ENCODE measurements at regions of chr1 and their contacts with region 1.

Region 1: GRCh38 chr1:94061513-94062443 is 59.2 kb downstream of the ABCA4 start:
- DNase-seq: peak; percentile 75 to 85 (median 78)
- ATAC-seq: peak; percentile 65 to 89 (median 87)
- H3K4me3 ChIP-seq: no peak overlapping the region
- H3K27ac ChIP-seq: peak overlapping the region; percentile 29 to 73 (median 54)
- H3K4me1 ChIP-seq: peaks cover 0 to 63% (median 31%) of the 10 kb centered on the region in 12 donors
- H3K27me3 ChIP-seq: no peaks in the 10 kb centered on the region
- CTCF ChIP-seq: peak; percentile 77 to 94 (median 89)
- POLR2A ChIP-seq: no peak

Region 2: DNA sequence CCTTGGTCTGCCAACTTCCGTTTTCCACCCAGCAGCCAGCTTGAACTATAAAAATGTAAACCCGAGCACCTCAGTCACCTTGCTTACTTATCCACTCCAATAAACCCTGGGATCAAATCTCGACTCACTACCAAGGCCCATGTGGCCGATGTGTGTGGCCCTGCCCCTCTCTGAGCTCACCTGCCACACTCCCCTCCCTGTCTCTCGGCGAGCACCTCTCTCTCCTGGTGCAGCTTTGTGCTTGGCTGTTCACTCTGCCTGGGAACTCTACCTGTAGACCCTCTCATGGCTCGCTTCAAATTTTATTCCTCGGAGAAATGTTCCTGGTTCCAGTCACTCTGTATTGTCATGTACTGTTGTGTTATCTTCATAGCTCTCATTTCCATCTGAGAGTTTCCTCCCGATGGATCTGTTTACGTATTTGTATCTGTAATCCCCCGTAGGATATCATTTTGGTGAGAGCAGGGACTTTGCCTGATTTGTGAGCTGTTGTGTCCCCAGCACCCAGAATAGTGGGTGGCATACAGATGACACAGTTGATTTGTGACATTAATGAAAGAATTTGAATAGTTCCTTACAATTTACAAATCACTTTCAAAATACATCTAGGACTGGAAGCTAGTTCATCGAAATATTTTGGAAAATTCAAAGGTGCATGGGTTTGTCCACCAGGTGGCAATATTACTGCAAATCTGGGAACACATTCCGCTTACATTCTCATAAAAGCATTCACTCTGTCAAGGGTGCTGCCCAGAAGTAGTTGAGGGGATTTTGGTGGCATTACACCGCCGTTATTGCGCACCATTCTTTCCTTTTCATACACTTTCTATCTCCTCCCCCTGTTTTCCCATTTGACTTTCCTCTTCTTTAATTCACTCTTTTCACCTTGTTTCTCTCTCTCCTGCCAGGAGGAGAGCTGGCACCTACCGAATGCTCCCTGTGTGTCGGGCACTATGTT is 36.1 kb before region 1 on chr1:
- intact Hi-C with region 1: loop called in 1 of 10 experiments (anchors 2 kb)
- DNase-seq: no peak
- ATAC-seq: peak in 2 of 4 donors; percentile 44 to 51
- H3K4me3 ChIP-seq: peak overlapping the region in 1 of 12 donors; percentile 4
- H3K27ac ChIP-seq: no peak overlapping the region
- H3K4me1 ChIP-seq: peaks cover 0 to 23% (median 5%) of the 10 kb centered on the region in 12 donors
- H3K27me3 ChIP-seq: no peaks in the 10 kb centered on the region
- CTCF ChIP-seq: peak; percentile 72 to 89 (median 81)
- POLR2A ChIP-seq: no peak

Region 3: DNA sequence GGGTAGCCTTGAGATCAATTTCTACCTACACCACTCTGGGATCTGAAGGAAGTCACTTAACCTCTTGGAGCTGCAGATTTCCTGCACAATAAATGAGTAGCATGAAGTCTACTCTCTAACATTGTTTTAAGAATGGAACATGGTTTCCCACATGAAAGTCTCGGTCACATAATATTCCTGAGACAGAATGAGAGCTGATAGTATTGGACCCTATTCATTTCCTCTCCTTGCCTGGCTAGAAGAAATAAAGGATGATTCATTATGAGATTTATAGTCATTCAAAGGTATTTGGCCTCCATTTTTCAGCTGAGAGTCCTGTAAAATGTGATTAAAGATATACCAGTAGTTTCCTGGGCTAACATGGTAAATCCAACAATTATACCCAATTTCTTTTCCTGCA is 118.9 kb after region 1 on chr1:
- intact Hi-C with region 1: loop called in 2 of 10 experiments (anchors 10 kb)
- DNase-seq: no peak
- ATAC-seq: no peak
- H3K4me3 ChIP-seq: no peak overlapping the region
- H3K27ac ChIP-seq: peak overlapping the region in 1 of 12 donors; percentile 4
- H3K4me1 ChIP-seq: peaks cover 0 to 30% (median 13%) of the 10 kb centered on the region in 12 donors
- H3K27me3 ChIP-seq: no peaks in the 10 kb centered on the region
- CTCF ChIP-seq: no peak
- POLR2A ChIP-seq: no peak

Region 4: GRCh38 chr1:94329986-94330385 is 268.2 kb after region 1 on chr1:
- intact Hi-C with region 1: loop called in 9 of 10 experiments (anchors 1 to 5 kb)
- DNase-seq: peak in 1 of 5 donors; percentile 22
- ATAC-seq: peak in 3 of 4 donors; percentile 6 to 46 (median 40)
- H3K4me3 ChIP-seq: peak overlapping the region in 5 of 12 donors; percentile 5 to 28 (median 13)
- H3K27ac ChIP-seq: peak overlapping the region in 10 of 12 donors; percentile 38 to 79 (median 76)
- H3K4me1 ChIP-seq: peaks cover 6 to 72% (median 52%) of the 10 kb centered on the region in 12 donors
- H3K27me3 ChIP-seq: peaks cover 0 to 18% (median 0%) of the 10 kb centered on the region in 9 donors
- CTCF ChIP-seq: peak in 11 of 12 donors; percentile 23 to 70 (median 54)
- POLR2A ChIP-seq: no peak

Region 5: DNA sequence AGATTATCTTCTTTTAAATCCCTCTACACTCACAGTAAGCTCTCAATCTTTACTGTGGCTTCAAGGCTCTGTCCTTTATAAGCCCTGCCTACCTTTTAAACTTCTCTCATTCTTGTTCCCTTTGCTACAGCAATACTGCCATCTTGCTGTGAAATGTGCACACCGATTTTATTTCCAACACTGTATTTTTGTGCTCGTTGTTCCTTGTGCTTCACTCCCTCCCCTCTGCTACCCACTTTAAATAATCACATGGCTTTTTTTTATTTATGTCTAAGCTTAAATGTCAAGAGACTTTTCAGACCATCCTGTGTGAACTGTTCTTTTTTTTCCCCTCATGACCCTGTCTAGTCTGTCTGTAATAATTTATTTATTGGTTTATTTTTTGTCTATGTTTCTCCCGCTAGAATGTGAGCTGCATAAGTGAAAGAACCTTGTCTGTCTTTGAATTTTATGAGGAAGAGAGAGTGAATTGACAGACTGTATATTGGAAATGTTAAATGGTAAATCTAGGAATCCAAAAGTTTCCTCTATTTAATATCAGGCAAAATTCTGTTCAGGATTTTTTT is 402.1 kb after region 1 on chr1:
- intact Hi-C with region 1: loop called in 3 of 10 experiments (anchors 5 to 10 kb)
- DNase-seq: no peak
- ATAC-seq: peak; percentile 69 to 83 (median 78)
- H3K4me3 ChIP-seq: no peak overlapping the region
- H3K27ac ChIP-seq: peak overlapping the region in 1 of 12 donors; percentile 58
- H3K4me1 ChIP-seq: peaks cover 0 to 12% (median 6%) of the 10 kb centered on the region in 12 donors
- H3K27me3 ChIP-seq: no peaks in the 10 kb centered on the region
- CTCF ChIP-seq: peak; percentile 16 to 70 (median 54)
- POLR2A ChIP-seq: no peak

Measured in heart left ventricle (tissue), 16 donors.